SK-N-SH (cell line): ENCODE measurements at regions of chr19 and their contacts with region 1.

Region 1: GRCh38 chr19:55160128-55160985 is 2.8 kb upstream of the TNNI3 start:
- DNase-seq: peak; percentile 98
- H3K4me3 ChIP-seq: peak overlapping the region in 1 of 2 experiments; percentile 52; a peak in 1 of 4 replicates
- H3K27ac ChIP-seq: no peak overlapping the region
- H3K4me1 ChIP-seq: peaks cover 0 to 10% of the 10 kb centered on the region in 2 experiments; a peak in 1 of 4 replicates
- H3K27me3 ChIP-seq: peaks cover 21% of the 10 kb centered on the region
- CTCF ChIP-seq: peak; percentile 90
- EP300 ChIP-seq: no peak
- RAD21 ChIP-seq: peak; percentile 71

Region 2: GRCh38 chr19:55132453-55133129 is 27.8 kb before region 1 on chr19:
- CTCF ChIA-PET with region 1: interaction called, 12 read pairs
- POLR2A ChIA-PET with region 1: no interaction called
- DNase-seq: peak; percentile 56
- H3K4me3 ChIP-seq: no peak overlapping the region
- H3K27ac ChIP-seq: no peak overlapping the region
- H3K4me1 ChIP-seq: no peaks in the 10 kb centered on the region
- H3K27me3 ChIP-seq: peaks cover 13% of the 10 kb centered on the region; the same call in 1 of the 2 replicates
- CTCF ChIP-seq: peak; percentile 41
- EP300 ChIP-seq: no peak
- RAD21 ChIP-seq: peak; percentile 55

Region 3: GRCh38 chr19:55178781-55179599 is 18.6 kb after region 1 on chr19:
- CTCF ChIA-PET with region 1: interaction called, 12 read pairs
- POLR2A ChIA-PET with region 1: no interaction called
- DNase-seq: peak; percentile 97
- H3K4me3 ChIP-seq: peak overlapping the region; percentile 54 to 56
- H3K27ac ChIP-seq: peak overlapping the region in 1 of 2 experiments; percentile 77; a peak in 1 of 4 replicates
- H3K4me1 ChIP-seq: peaks cover 0 to 6% of the 10 kb centered on the region in 2 experiments; a peak in 1 of 4 replicates
- H3K27me3 ChIP-seq: peaks cover 29% of the 10 kb centered on the region
- CTCF ChIP-seq: no peak
- EP300 ChIP-seq: peak in 1 of 2 experiments; percentile 29; a peak in 1 of 4 replicates
- RAD21 ChIP-seq: peak; percentile 29